Naive thymus-derived CD4-positive, alpha-beta T cell (primary cell): ENCODE measurements at regions of chr19 and their contacts with region 1.

Region 1: DNA sequence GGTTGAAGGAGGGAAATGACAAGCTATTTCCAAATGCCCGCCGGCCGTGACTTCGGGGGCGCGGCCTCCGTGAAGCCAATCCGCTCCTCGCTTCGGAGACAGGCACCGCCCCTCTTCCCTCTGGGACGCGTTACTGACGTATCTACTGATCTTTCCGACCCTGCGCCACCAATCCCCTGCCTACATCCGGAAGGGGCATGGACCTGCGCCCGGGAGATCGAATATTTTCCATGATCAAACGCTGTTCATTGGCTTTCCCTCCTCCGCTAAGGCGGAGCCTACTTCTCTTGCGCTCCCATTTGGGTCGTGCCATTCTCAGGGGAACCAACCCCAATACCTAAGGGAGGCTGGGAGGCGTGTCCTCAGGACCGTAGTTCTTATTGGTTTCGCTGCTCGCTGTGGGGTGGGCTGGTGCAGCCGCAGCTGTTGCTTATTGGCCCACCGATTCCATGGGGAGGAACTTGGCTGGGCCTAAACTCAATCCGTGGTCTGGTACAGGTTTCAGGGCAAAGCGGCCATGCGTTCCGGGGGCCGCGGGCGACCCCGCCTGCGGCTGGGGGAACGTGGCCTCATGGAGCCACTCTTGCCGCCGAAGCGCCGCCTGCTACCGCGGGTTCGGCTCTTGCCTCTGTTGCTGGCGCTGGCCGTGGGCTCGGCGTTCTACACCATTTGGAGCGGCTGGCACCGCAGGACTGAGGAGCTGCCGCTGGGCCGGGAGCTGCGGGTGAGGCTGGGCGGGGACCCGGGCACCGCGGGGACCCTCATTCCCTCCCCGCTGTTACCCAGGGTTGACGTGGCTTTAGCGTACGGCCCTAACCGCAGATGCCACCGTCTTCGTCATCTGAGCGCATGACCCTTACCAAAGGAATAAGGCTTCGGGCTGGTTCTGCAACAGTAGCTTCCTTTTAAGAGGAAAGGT is at the start of gene QPCTL:
- DNase-seq: peak; percentile 76 to 99 (median 97)
- ATAC-seq: peak; percentile 93
- H3K4me3 ChIP-seq: peak within 1 kb of the TSS; percentile 90
- H3K4me3 Mint-ChIP-seq: peak within 1 kb of the TSS; percentile 89 to 99 (median 97)
- H3K27ac ChIP-seq: peak within 1 kb of the TSS; percentile 89
- H3K27ac Mint-ChIP-seq: peak within 1 kb of the TSS; percentile 94 to 98 (median 96)
- H3K4me1 ChIP-seq: peaks cover 7 to 15% of the 10 kb centered on the region in 2 donors
- H3K4me1 Mint-ChIP-seq: peaks cover 13 to 38% (median 22%) of the 10 kb centered on the region in 7 donors
- H3K27me3 ChIP-seq: no peaks in the 10 kb centered on the region
- H3K27me3 Mint-ChIP-seq: peaks cover 0 to 2% (median 0%) of the 10 kb centered on the region in 5 donors
- total RNA-seq, gene QPCTL: 6.1 to 8.9 (median 7.9) TPM

Region 2: DNA sequence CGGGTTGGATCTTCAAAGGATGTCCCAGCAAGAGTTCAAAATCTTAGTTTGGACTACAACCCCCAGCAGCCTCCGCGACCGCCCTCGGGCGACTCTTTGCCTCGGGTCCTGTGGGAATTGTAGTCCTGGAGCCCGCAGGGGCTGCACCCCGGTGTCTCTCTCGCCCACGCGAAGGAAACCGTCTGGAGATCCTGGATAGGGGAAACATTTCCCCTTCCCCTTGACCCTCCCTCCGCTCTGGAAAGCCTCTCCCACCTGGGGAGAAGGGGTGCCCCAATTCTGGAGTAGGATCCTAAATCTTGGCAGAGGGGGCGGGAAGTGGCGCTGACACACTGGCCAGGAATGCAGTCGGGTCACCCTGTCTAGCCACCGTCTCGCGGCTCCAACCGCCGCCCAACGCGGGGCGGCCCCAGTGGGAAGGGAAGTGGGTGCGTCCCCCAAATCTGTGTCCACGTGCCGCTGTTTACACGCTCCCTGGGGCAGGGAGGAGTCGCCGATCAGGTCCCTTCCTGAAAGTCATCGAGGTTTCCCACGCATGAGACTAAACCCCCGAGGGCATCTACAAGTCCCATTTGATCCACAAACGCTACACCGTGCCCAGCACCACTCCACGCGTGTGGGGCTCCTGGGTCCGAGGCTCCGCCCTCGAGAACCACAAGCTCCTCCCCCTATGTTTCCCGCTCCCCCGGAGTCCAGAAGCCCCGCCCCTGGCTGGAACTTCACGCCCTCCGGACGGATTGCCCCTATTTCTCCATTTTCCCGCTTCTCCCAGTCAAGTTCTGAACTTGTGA is 286.8 kb before region 1 on chr19:
- CTCF ChIA-PET with region 1: interaction called, 4 read pairs
- POLR2A ChIA-PET with region 1: no interaction called
- intact Hi-C with region 1: loop called (anchors 5 kb)
- DNase-seq: peak; percentile 62 to 88 (median 81)
- ATAC-seq: peak; percentile 75
- H3K4me3 ChIP-seq: peak overlapping the region; percentile 77
- H3K4me3 Mint-ChIP-seq: peak overlapping the region; percentile 91 to 99 (median 97)
- H3K27ac ChIP-seq: peak overlapping the region; percentile 71
- H3K27ac Mint-ChIP-seq: peak overlapping the region; percentile 90 to 99 (median 94)
- H3K4me1 ChIP-seq: peaks cover 16 to 25% of the 10 kb centered on the region in 2 donors
- H3K4me1 Mint-ChIP-seq: peaks cover 28 to 53% (median 32%) of the 10 kb centered on the region in 7 donors
- H3K27me3 ChIP-seq: peaks cover 10 to 18% of the 10 kb centered on the region in 2 donors
- H3K27me3 Mint-ChIP-seq: peaks cover 15 to 27% (median 21%) of the 10 kb centered on the region in 5 donors

Region 3: GRCh38 chr19:45485305-45486077 is 207.0 kb before region 1 on chr19:
- CTCF ChIA-PET with region 1: no interaction called
- POLR2A ChIA-PET with region 1: no interaction called
- intact Hi-C with region 1: loop called in 1 of 2 experiments (anchors 1 kb)
- DNase-seq: peak; percentile 91 to 98 (median 95)
- ATAC-seq: peak; percentile 99
- H3K4me3 ChIP-seq: peak overlapping the region; percentile 85
- H3K4me3 Mint-ChIP-seq: peak overlapping the region; percentile 83 to 96 (median 90)
- H3K27ac ChIP-seq: peak overlapping the region; percentile 60
- H3K27ac Mint-ChIP-seq: peak overlapping the region in 8 of 9 donors; percentile 34 to 88 (median 82)
- H3K4me1 ChIP-seq: peaks cover 0 to 4% of the 10 kb centered on the region in 2 donors
- H3K4me1 Mint-ChIP-seq: peaks cover 0 to 13% (median 5%) of the 10 kb centered on the region in 7 donors
- H3K27me3 ChIP-seq: no peaks in the 10 kb centered on the region
- H3K27me3 Mint-ChIP-seq: peaks cover 0 to 7% (median 0%) of the 10 kb centered on the region in 5 donors

Region 4: DNA sequence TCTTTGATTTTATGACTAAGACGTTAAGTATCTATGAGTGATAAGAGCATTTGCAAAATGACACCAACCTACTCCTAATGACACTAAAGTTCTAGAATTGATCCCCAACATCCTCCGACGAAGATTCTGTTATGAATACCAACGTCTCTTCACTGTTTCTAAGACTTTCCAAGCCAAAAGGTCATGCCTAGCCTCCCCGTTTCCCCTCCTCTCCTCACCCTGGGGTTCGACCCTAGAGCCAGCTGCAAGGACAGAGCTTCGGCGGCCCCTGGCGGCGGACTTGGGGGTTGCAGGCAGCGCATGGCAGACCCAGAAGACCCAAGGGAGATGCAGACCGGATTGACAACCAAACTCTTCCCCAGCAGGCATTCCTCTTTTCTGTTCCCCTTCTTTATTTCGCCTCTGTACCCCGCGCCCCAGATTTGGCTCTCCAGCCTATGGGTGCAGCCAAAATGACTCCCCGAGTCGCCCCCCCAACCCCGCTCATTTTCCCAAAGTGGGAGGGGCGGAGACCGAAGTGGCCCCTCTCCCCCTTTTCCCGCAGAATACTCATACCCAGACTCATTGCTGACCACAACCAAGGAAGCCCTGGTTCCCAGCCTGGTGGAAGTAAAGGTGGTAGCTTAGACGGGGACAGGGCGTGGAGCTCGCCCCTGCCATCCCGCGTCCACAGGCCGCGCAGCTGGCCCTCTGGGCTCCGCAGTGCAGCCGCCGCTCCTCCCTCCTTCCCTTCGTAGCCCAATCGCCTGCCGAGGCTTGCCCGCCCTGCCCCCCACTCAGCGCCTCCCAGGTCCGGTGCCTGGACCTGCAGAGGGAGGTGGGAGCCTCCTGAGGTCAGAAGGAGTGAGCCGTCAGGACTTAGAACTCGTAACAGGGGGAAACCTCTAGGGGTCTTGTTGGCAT is 49.2 kb before region 1 on chr19:
- CTCF ChIA-PET with region 1: interaction called, 5 read pairs
- POLR2A ChIA-PET with region 1: interaction called, 10 read pairs
- intact Hi-C with region 1: loop called in 1 of 2 experiments (anchors 1 kb)
- DNase-seq: peak; percentile 78 to 97 (median 90)
- ATAC-seq: peak; percentile 44
- H3K4me3 ChIP-seq: no peak overlapping the region
- H3K4me3 Mint-ChIP-seq: peak overlapping the region; percentile 61 to 91 (median 80)
- H3K27ac ChIP-seq: peak overlapping the region; percentile 78
- H3K27ac Mint-ChIP-seq: peak overlapping the region; percentile 52 to 92 (median 85)
- H3K4me1 ChIP-seq: peaks cover 22 to 25% of the 10 kb centered on the region in 2 donors
- H3K4me1 Mint-ChIP-seq: peaks cover 31 to 54% (median 43%) of the 10 kb centered on the region in 7 donors
- H3K27me3 ChIP-seq: no peaks in the 10 kb centered on the region
- H3K27me3 Mint-ChIP-seq: peaks cover 0 to 6% (median 3%) of the 10 kb centered on the region in 5 donors

Region 5: GRCh38 chr19:45730389-45731288 is 38.2 kb after region 1 on chr19 and contains the start of gene FBXO46:
- CTCF ChIA-PET with region 1: interaction called, 6 read pairs
- POLR2A ChIA-PET with region 1: interaction called, 11 read pairs
- intact Hi-C with region 1: loop called (anchors 1 kb)
- DNase-seq: peak; percentile 74 to 94 (median 90)
- ATAC-seq: peak; percentile 99
- H3K4me3 ChIP-seq: peak within 1 kb of the TSS; percentile 96
- H3K4me3 Mint-ChIP-seq: peak within 1 kb of the TSS; percentile 85 to 98 (median 92)
- H3K27ac ChIP-seq: peak within 1 kb of the TSS; percentile 92
- H3K27ac Mint-ChIP-seq: peak within 1 kb of the TSS; percentile 60 to 93 (median 91)
- H3K4me1 ChIP-seq: peaks cover 6 to 14% of the 10 kb centered on the region in 2 donors
- H3K4me1 Mint-ChIP-seq: peaks cover 27 to 41% (median 33%) of the 10 kb centered on the region in 7 donors
- H3K27me3 ChIP-seq: no peaks in the 10 kb centered on the region
- H3K27me3 Mint-ChIP-seq: peaks cover 0 to under 1% (median 0%) of the 10 kb centered on the region in 5 donors
- total RNA-seq, gene FBXO46: 21.2 to 52.9 (median 36.6) TPM

Region 6: GRCh38 chr19:45862564-45863334 is 170.3 kb after region 1 on chr19 and contains the start of gene SYMPK:
- CTCF ChIA-PET with region 1: no interaction called
- POLR2A ChIA-PET with region 1: no interaction called
- intact Hi-C with region 1: loop called (anchors 1 to 5 kb)
- DNase-seq: peak; percentile 93 to 99 (median 99)
- ATAC-seq: peak; percentile 99
- H3K4me3 ChIP-seq: peak within 1 kb of the TSS; percentile 95
- H3K4me3 Mint-ChIP-seq: peak within 1 kb of the TSS; percentile 90 to 100 (median 96)
- H3K27ac ChIP-seq: peak within 1 kb of the TSS; percentile 86
- H3K27ac Mint-ChIP-seq: peak within 1 kb of the TSS; percentile 84 to 99 (median 95)
- H3K4me1 ChIP-seq: peaks cover 12 to 15% of the 10 kb centered on the region in 2 donors
- H3K4me1 Mint-ChIP-seq: peaks cover 29 to 37% (median 36%) of the 10 kb centered on the region in 7 donors
- H3K27me3 ChIP-seq: peaks cover 0 to 4% of the 10 kb centered on the region in 2 donors
- H3K27me3 Mint-ChIP-seq: peaks cover 6 to 39% (median 21%) of the 10 kb centered on the region in 5 donors
- total RNA-seq, gene SYMPK: 81.3 to 110 (median 96.4) TPM